Gastrocnemius medialis (tissue), 4 donors: ENCODE measurements at regions of chr1 and their contacts with region 1.

Region 1: DNA sequence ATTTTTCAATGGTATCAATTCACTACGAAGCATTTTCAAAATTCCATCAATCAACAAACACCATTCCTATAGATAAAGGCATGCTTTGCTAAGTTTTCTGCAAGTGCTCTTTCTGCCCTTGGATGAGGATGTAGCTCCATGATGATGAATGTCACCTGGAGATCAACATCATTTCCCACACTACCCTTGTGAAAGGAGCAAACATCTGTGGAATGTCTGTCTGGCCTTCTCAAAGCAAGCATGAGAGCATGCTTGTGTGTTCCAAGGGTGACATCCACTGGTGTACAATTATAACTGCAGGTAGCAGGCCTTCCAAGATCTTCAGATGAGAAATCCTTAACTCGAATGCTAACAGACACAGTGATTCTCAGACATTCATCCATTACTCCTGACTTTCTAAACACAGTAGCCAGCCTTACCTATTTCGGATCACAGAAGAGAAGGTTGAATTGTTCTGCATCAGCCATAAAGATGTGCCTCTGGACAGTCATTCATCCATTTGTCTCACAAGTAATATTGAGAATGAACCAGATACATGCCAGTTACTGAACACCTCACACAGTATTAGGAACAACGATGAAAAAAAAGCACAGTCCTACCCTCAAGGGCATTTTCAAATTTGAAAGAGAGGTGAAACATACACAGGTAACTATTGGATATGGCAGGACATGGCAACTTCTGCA is 162.4 kb downstream of the TPR start:
- DNase-seq: no peak
- ATAC-seq: peak; percentile 74 to 75
- H3K4me3 ChIP-seq: no peak overlapping the region
- H3K27ac ChIP-seq: no peak overlapping the region
- H3K4me1 ChIP-seq: no peaks in the 10 kb centered on the region
- H3K27me3 ChIP-seq: no peaks in the 10 kb centered on the region
- CTCF ChIP-seq: peak; percentile 25 to 68 (median 52)
- POLR2A ChIP-seq: no peak

Region 2: GRCh38 chr1:185156854-185157598 is 1055.7 kb before region 1 on chr1 and contains the starts of genes SWT1 and TRMT1L:
- in situ Hi-C with region 1: no loop called
- intact Hi-C with region 1: no loop called
- DNase-seq: peak; percentile 99 to 100
- ATAC-seq: peak; percentile 94 to 96
- H3K4me3 ChIP-seq: peak within 1 kb of the TSS; percentile 75 to 99 (median 96)
- H3K27ac ChIP-seq: peak within 1 kb of the TSS; percentile 93 to 99 (median 98)
- H3K4me1 ChIP-seq: peaks cover 25 to 36% of the 10 kb centered on the region in 2 donors
- H3K27me3 ChIP-seq: no peaks in the 10 kb centered on the region
- CTCF ChIP-seq: no peak
- POLR2A ChIP-seq: peak; percentile 94 to 95
- total RNA-seq, gene SWT1: 3.4 to 6.2 (median 4.6) TPM
- total RNA-seq, gene TRMT1L: 24.9 to 42.8 (median 30.0) TPM

Region 3: GRCh38 chr1:185720633-185721272 is 491.9 kb before region 1 on chr1:
- in situ Hi-C with region 1: loop called in 3 of 4 experiments (anchors 10 to 25 kb)
- intact Hi-C with region 1: loop called (anchors 2 kb)
- DNase-seq: no peak
- ATAC-seq: no peak
- H3K4me3 ChIP-seq: no peak overlapping the region
- H3K27ac ChIP-seq: no peak overlapping the region
- H3K4me1 ChIP-seq: no peaks in the 10 kb centered on the region
- H3K27me3 ChIP-seq: no peaks in the 10 kb centered on the region
- CTCF ChIP-seq: peak in 3 of 5 experiments; percentile 28 to 55 (median 46)
- POLR2A ChIP-seq: no peak

Region 4: GRCh38 chr1:185813401-185813979 is 399.2 kb before region 1 on chr1:
- in situ Hi-C with region 1: loop called in 2 of 4 experiments (anchors 10 to 25 kb)
- intact Hi-C with region 1: no loop called
- DNase-seq: no peak
- ATAC-seq: no peak
- H3K4me3 ChIP-seq: no peak overlapping the region
- H3K27ac ChIP-seq: no peak overlapping the region
- H3K4me1 ChIP-seq: no peaks in the 10 kb centered on the region
- H3K27me3 ChIP-seq: no peaks in the 10 kb centered on the region
- CTCF ChIP-seq: peak in 2 of 5 experiments; percentile 40 to 50
- POLR2A ChIP-seq: no peak

Region 5: DNA sequence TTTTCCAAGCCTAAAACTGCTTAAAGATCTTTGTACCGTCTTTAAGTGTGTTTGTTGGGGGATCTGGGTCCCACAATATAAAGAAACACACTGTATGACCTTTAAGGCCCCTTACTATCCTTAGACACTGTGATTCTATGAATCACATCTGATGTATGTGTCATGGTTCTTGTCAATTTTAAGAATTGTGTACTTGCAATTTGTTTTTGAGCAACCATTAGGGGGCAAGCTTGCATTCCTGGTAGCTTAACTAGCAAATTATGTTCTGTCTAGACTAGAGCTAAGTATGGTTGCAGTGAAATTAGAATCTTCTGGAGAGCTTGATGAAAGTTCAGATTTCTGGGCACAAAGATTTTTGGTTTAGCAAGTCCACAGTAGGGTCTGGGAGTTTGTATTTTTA is 57.1 kb before region 1 on chr1:
- in situ Hi-C with region 1: no loop called
- intact Hi-C with region 1: loop called (anchors 5 kb)
- DNase-seq: no peak
- ATAC-seq: no peak
- H3K4me3 ChIP-seq: no peak overlapping the region
- H3K27ac ChIP-seq: no peak overlapping the region
- H3K4me1 ChIP-seq: no peaks in the 10 kb centered on the region
- H3K27me3 ChIP-seq: no peaks in the 10 kb centered on the region
- CTCF ChIP-seq: peak in 1 of 5 experiments; percentile 8
- POLR2A ChIP-seq: no peak